Kidney (tissue), 22 donors: ENCODE measurements at regions of chr2 and their contacts with region 1.

Region 1: GRCh38 chr2:42663106-42663780 is 94.8 kb downstream of the MTA3 start:
- DNase-seq: peak; percentile 77 to 92 (median 82)
- H3K4me3 ChIP-seq: no peak overlapping the region
- H3K27ac ChIP-seq: no peak overlapping the region
- H3K4me1 ChIP-seq: peaks cover 0 to 2% (median 0%) of the 10 kb centered on the region in 3 donors
- H3K27me3 ChIP-seq: no peaks in the 10 kb centered on the region
- CTCF ChIP-seq: peak; percentile 98

Region 2: GRCh38 chr2:42127425-42128424 is 535.5 kb before region 1 on chr2:
- intact Hi-C with region 1: no loop called
- DNase-seq: no peak
- H3K4me3 ChIP-seq: no peak overlapping the region
- H3K27ac ChIP-seq: no peak overlapping the region
- H3K4me1 ChIP-seq: peaks cover 9 to 25% (median 14%) of the 10 kb centered on the region in 3 donors
- H3K27me3 ChIP-seq: no peaks in the 10 kb centered on the region
- CTCF ChIP-seq: no peak

Region 3: GRCh38 chr2:42513257-42513918 is 149.9 kb before region 1 on chr2:
- intact Hi-C with region 1: loop called (anchors 10 kb)
- DNase-seq: peak in 2 of 5 donors; percentile 48 to 53
- H3K4me3 ChIP-seq: no peak overlapping the region
- H3K27ac ChIP-seq: no peak overlapping the region
- H3K4me1 ChIP-seq: no peaks in the 10 kb centered on the region
- H3K27me3 ChIP-seq: no peaks in the 10 kb centered on the region
- CTCF ChIP-seq: peak; percentile 40